ENCODE measurements at regions of chr9 and their contacts with region 1.

Region 1: GRCh38 chr9:33404788-33405362 is 2.5 kb upstream of the AQP7 start:
- DNase-seq: no peak
- ATAC-seq: no peak
- H3K4me3 Mint-ChIP-seq: no peak overlapping the region
- H3K27ac Mint-ChIP-seq: no peak overlapping the region
- H3K4me1 Mint-ChIP-seq: peaks cover 7% of the 10 kb centered on the region
- H3K27me3 Mint-ChIP-seq: peaks cover 5% of the 10 kb centered on the region

Region 2: GRCh38 chr9:33331377-33331891 is 73.4 kb before region 1 on chr9:
- CTCF ChIA-PET with region 1: no interaction called
- POLR2A ChIA-PET with region 1: no interaction called
- DNase-seq: no peak
- ATAC-seq: no peak
- H3K4me3 Mint-ChIP-seq: no peak overlapping the region
- H3K27ac Mint-ChIP-seq: peak overlapping the region; percentile 12
- H3K4me1 Mint-ChIP-seq: no peaks in the 10 kb centered on the region
- H3K27me3 Mint-ChIP-seq: no peaks in the 10 kb centered on the region

Region 3: GRCh38 chr9:33466565-33467495 is 62.0 kb after region 1 on chr9:
- CTCF ChIA-PET with region 1: interaction called, 70 read pairs
- POLR2A ChIA-PET with region 1: no interaction called
- DNase-seq: peak; percentile 79
- ATAC-seq: peak; percentile 71
- H3K4me3 Mint-ChIP-seq: no peak overlapping the region
- H3K27ac Mint-ChIP-seq: peak overlapping the region; percentile 25
- H3K4me1 Mint-ChIP-seq: peaks cover 7% of the 10 kb centered on the region
- H3K27me3 Mint-ChIP-seq: no peaks in the 10 kb centered on the region

Region 4: GRCh38 chr9:33510264-33511183 is 105.6 kb after region 1 on chr9:
- CTCF ChIA-PET with region 1: no interaction called
- POLR2A ChIA-PET with region 1: no interaction called
- DNase-seq: peak; percentile 44
- ATAC-seq: peak; percentile 92
- H3K4me3 Mint-ChIP-seq: peak overlapping the region; percentile 90
- H3K27ac Mint-ChIP-seq: peak overlapping the region; percentile 89
- H3K4me1 Mint-ChIP-seq: peaks cover 7% of the 10 kb centered on the region
- H3K27me3 Mint-ChIP-seq: peaks cover 8% of the 10 kb centered on the region